ENCODE measurements at regions of chr11 and their contacts with region 1.

Region 1: GRCh38 chr11:67353317-67354074 is at the start of gene POLD4:
- DNase-seq: peak; percentile 87
- H3K4me3 ChIP-seq: peak within 1 kb of the TSS; percentile 59 to 90 (median 73)
- H3K27ac ChIP-seq: peak within 1 kb of the TSS; percentile 78
- H3K4me1 ChIP-seq: peaks cover 62% of the 10 kb centered on the region
- H3K27me3 ChIP-seq: no peaks in the 10 kb centered on the region
- CTCF ChIP-seq: no peak
- total RNA-seq, gene POLD4: 39.2 to 75.2 TPM

Region 2: GRCh38 chr11:67332081-67332691 is 21.3 kb before region 1 on chr11:
- CTCF ChIA-PET with region 1: interaction called, 27 read pairs
- dilution Hi-C with region 1: no loop called
- in situ Hi-C with region 1: no loop called
- intact Hi-C with region 1: no loop called
- DNase-seq: peak; percentile 74
- H3K4me3 ChIP-seq: no peak overlapping the region
- H3K27ac ChIP-seq: peak overlapping the region; percentile 47
- H3K4me1 ChIP-seq: peaks cover 14% of the 10 kb centered on the region
- H3K27me3 ChIP-seq: no peaks in the 10 kb centered on the region
- CTCF ChIP-seq: no peak

Region 3: DNA sequence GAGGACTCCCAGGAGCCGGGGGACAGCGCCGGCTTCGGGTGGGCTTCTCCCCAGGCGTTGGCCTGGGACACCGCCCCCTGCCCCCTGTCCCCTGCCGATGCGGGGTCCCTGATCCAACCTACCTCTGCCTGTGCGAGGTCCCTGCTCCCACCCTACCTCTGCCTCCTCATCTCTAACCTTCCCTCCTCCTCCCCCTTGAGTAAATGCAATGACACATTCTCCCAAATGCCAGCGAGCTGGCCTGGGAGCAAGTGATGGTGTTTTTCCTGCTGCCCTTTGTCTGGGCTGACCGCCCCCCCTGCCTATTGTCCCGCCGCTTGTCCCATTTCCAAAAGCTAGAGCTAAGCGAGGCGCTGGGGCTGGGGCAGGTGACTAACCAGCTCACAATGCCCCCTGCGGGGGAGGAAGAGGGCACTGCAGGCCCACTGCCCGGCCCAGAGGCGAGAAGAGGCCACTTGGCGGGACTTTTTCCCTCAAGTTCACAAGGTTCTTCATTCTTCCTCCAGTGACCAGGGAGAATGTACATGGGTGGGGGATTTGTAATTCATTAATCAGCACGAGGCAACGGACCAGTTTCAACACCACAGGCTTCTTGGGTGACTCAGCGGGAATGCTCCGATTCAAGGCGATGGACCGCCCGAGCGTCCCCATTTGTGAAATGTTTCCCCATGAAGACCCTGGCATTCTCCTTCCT is 20.6 kb after region 1 on chr11:
- CTCF ChIA-PET with region 1: interaction called, 5 read pairs
- dilution Hi-C with region 1: no loop called
- in situ Hi-C with region 1: no loop called
- intact Hi-C with region 1: loop called (anchors 1 kb)
- DNase-seq: peak; percentile 97
- H3K4me3 ChIP-seq: peak overlapping the region; percentile 66 to 84 (median 72)
- H3K27ac ChIP-seq: peak overlapping the region; percentile 95
- H3K4me1 ChIP-seq: peaks cover 54% of the 10 kb centered on the region
- H3K27me3 ChIP-seq: no peaks in the 10 kb centered on the region
- CTCF ChIP-seq: peak; percentile 14 to 36

Region 4: GRCh38 chr11:67382276-67383136 is 29.0 kb after region 1 on chr11:
- CTCF ChIA-PET with region 1: interaction called, 13 read pairs
- dilution Hi-C with region 1: loop called (anchors 5 kb)
- in situ Hi-C with region 1: no loop called
- intact Hi-C with region 1: loop called (anchors 1 kb)
- DNase-seq: peak; percentile 58
- H3K4me3 ChIP-seq: no peak overlapping the region
- H3K27ac ChIP-seq: no peak overlapping the region
- H3K4me1 ChIP-seq: peaks cover 32% of the 10 kb centered on the region
- H3K27me3 ChIP-seq: no peaks in the 10 kb centered on the region
- CTCF ChIP-seq: peak; percentile 99 to 100

Region 5: DNA sequence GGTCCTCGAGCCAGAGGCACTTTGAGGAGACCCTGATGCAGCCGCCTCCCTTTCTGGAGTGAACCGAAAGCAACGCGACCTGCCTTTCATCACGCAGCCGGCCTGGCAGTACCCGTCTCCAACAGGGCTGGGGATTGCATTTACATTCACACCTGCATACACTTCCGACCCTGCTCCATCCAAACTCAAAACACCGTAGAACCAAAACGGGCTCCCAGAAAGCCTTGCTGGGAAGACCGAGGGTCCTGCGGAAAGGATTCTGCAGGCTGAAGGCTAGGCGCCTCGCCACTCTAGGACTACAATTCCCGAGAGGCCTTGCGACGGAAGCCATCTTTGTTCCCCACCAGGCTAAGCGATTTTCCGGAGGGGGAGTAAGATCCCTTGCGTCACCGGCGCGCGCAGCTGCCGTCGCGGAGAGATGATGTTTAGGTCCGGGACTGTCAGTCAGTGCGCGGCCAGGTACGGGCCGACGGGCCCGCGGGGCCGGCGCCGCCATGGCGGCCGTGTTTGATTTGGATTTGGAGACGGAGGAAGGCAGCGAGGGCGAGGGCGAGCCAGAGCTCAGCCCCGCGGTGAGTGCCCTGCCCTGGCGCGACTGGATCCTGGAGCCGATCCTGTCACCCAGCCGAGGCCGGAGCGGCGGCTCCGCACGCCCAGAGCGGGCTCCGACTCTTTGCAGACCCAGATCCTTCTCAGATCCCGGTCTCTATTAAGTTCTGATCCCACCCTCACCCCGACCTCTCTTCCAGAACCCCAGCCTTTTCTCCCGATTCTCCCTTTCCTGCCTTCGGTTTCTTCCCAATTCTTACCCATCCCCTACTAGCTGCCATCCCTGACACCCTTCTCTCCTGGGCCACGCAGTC is 74.8 kb after region 1 on chr11 and contains the start of gene RPS6KB2:
- CTCF ChIA-PET with region 1: interaction called, 5 read pairs
- dilution Hi-C with region 1: no loop called
- in situ Hi-C with region 1: no loop called
- intact Hi-C with region 1: loop called (anchors 2 kb)
- DNase-seq: peak; percentile 95
- H3K4me3 ChIP-seq: peak within 1 kb of the TSS; percentile 62 to 72 (median 71)
- H3K27ac ChIP-seq: peak within 1 kb of the TSS; percentile 58
- H3K4me1 ChIP-seq: peaks cover 12% of the 10 kb centered on the region
- H3K27me3 ChIP-seq: no peaks in the 10 kb centered on the region
- CTCF ChIP-seq: no peak
- total RNA-seq, gene RPS6KB2: 35.7 to 62.3 TPM

Region 6: DNA sequence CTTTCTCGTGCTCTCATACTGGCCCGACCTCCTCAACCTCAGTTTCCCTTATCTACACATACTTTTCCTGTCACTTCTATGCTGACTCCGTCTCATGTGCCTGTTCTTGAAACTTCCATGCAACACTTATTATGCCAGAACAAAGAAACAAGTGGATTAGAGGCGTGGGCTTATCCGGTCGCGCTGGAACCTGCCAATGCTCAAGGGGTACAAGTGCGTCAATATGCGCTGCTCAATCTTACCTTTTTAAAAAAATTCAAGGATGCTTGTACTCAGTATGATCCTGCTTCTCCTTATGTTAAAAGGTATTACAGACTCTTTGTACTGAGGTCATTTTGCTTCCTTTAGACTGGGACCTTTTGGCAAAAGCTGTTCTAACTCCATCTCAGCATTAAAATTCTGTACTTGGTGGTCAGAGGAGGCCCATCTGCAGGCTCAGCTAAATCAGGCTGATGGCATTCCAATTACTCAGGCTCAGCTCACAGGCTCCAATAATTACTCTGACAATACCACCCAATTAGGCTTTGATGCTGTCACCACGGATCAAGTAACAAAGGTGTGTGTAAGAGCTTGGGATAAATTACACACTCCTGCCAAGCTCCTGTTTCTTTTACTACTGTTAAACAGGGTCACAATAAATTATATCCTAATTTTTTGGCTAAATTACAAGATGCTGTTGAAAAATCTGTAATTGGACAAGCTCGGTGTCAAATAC is 347.2 kb after region 1 on chr11:
- CTCF ChIA-PET with region 1: no interaction called
- dilution Hi-C with region 1: no loop called
- in situ Hi-C with region 1: no loop called
- intact Hi-C with region 1: loop called (anchors 10 kb)
- DNase-seq: no peak
- H3K4me3 ChIP-seq: no peak overlapping the region
- H3K27ac ChIP-seq: no peak overlapping the region
- H3K4me1 ChIP-seq: peaks cover 16% of the 10 kb centered on the region
- H3K27me3 ChIP-seq: no peaks in the 10 kb centered on the region
- CTCF ChIP-seq: no peak

Region 7: DNA sequence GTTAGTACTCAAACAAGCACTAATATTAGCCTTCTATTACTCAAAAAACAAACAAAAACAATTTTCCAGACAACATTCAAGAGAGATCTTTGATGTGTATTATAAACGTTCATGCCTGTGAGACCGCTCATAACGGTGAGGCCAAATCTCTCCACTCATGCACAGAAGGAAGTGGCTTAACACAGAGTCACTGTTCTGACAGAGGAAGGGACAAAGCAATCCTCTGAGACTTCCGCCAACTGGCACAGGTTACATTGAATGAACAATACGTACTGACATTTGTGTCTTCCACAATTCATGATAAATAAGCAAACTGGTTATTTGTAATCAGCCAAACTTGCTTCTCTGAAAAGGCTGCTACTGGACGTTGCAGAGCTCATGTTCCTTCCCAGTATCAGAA is 737.2 kb after region 1 on chr11:
- CTCF ChIA-PET with region 1: no interaction called
- dilution Hi-C with region 1: no loop called
- in situ Hi-C with region 1: no loop called
- intact Hi-C with region 1: no loop called
- DNase-seq: no peak
- H3K4me3 ChIP-seq: no peak overlapping the region
- H3K27ac ChIP-seq: no peak overlapping the region
- H3K4me1 ChIP-seq: no peaks in the 10 kb centered on the region
- H3K27me3 ChIP-seq: no peaks in the 10 kb centered on the region
- CTCF ChIP-seq: no peak

Measured in mammary epithelial cell (primary cell).